ENCODE measurements at regions of chr6 and their contacts with region 1.

Region 1: GRCh38 chr6:38639498-38640215 is at the start of gene BTBD9:
- DNase-seq: peak; percentile 76 to 87
- H3K4me3 ChIP-seq: peak within 1 kb of the TSS; percentile 77 to 86
- H3K27ac ChIP-seq: peak within 1 kb of the TSS; percentile 91 to 94
- H3K4me1 ChIP-seq: peaks cover 0 to 19% (median 10%) of the 10 kb centered on the region in 4 donors
- H3K27me3 ChIP-seq: no peaks in the 10 kb centered on the region
- CTCF ChIP-seq: peak in 1 of 2 experiments; percentile 13

Region 2: GRCh38 chr6:38337819-38338465 is 301.7 kb before region 1 on chr6:
- intact Hi-C with region 1: no loop called
- DNase-seq: no peak
- H3K4me3 ChIP-seq: no peak overlapping the region
- H3K27ac ChIP-seq: no peak overlapping the region
- H3K4me1 ChIP-seq: no peaks in the 10 kb centered on the region
- H3K27me3 ChIP-seq: no peaks in the 10 kb centered on the region
- CTCF ChIP-seq: no peak

Region 3: GRCh38 chr6:38702558-38703397 is 63.1 kb after region 1 on chr6 and contains the start of gene GLO1:
- intact Hi-C with region 1: loop called (anchors 10 kb)
- DNase-seq: peak; percentile 98 to 99
- H3K4me3 ChIP-seq: peak within 1 kb of the TSS; percentile 80 to 95
- H3K27ac ChIP-seq: peak within 1 kb of the TSS; percentile 87 to 99
- H3K4me1 ChIP-seq: peaks cover 0 to 12% (median 2%) of the 10 kb centered on the region in 4 donors
- H3K27me3 ChIP-seq: no peaks in the 10 kb centered on the region
- CTCF ChIP-seq: no peak

Region 4: GRCh38 chr6:38773338-38773737 is 133.7 kb after region 1 on chr6:
- intact Hi-C with region 1: no loop called
- DNase-seq: no peak
- H3K4me3 ChIP-seq: no peak overlapping the region
- H3K27ac ChIP-seq: no peak overlapping the region
- H3K4me1 ChIP-seq: no peaks in the 10 kb centered on the region
- H3K27me3 ChIP-seq: no peaks in the 10 kb centered on the region
- CTCF ChIP-seq: no peak

Measured in tibial artery (tissue), 4 donors.